AG04450 (cell line): ENCODE measurements at regions of chr4 and their contacts with region 1.

Region 1: GRCh38 chr4:154686838-154687237 is 57.0 kb upstream of the LRAT start:
- DNase-seq: no peak
- H3K4me3 ChIP-seq: no peak overlapping the region
- H3K27ac ChIP-seq: no peak overlapping the region
- H3K27me3 ChIP-seq: no peaks in the 10 kb centered on the region
- CTCF ChIP-seq: peak; percentile 25

Region 2: DNA sequence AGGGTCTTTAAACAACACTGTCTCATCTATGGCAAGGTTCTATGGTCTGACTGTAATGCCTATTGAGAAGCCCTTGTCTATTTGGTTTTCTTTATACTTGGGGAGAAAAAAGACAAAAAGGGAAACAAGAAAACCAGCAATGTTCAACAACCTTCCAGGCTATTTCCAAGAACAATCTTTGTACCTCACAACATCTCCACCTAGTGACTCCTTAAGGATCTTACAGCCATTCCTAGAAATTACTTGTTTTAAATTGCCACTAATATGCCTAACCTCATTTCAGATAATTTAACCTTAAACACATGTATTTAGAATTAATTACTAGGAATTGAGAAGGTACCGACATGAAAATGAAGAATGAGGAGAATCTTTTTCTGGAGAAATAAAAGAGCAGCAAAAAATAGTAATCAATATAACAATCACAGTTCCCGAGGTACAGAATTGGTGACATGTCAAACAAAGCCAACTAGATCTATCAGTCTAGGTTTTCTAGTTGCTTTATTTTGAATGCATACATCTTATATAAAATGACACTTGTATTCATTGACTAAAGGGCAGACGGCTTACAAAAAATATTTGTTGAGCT is 92.6 kb after region 1 on chr4:
- CTCF ChIA-PET with region 1: interaction called, 10 read pairs
- POLR2A ChIA-PET with region 1: no interaction called
- DNase-seq: peak; percentile 4
- H3K4me3 ChIP-seq: no peak overlapping the region
- H3K27ac ChIP-seq: no peak overlapping the region
- H3K27me3 ChIP-seq: no peaks in the 10 kb centered on the region
- CTCF ChIP-seq: peak; percentile 66